Gastrocnemius medialis (tissue), 4 donors: ENCODE measurements at regions of chr1 and their contacts with region 1.

Region 1: DNA sequence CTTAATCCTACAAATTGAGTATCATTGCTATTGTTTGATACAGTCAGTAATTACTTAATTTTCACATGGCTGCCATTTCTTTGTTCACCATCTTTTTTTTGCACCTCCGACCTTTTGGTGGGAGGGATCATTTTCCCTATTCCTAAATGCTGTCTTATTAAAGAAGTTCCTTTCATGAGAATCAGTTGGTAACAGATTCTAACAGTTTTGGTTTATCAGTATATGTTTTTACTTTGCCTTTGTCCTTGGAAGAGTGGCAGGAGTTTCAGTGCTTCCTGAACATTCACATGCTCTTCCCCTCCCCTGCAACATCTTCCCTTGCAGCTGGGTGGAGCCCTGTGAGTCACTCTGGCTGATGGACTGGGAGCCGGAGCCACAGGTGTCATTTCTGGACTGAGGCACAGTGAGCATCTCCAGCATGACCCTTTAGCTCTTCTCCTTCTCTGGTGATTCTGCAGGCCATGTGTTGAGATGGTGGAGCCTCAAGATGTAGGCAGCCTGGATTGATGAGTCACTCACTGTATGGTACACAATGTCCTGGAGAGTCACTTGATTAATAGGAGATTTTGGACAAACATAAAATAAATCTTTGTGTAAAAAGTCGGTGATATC is 217.7 kb downstream of the URB2 start:
- DNase-seq: peak; percentile 90 to 91
- ATAC-seq: peak; percentile 89 to 90
- H3K4me3 ChIP-seq: no peak overlapping the region
- H3K27ac ChIP-seq: peak overlapping the region; percentile 79 to 92 (median 88)
- H3K4me1 ChIP-seq: peaks cover 22 to 33% of the 10 kb centered on the region in 2 donors
- H3K27me3 ChIP-seq: no peaks in the 10 kb centered on the region
- CTCF ChIP-seq: peak; percentile 46 to 65 (median 50)
- POLR2A ChIP-seq: peak in 1 of 2 donors; percentile 33

Region 2: DNA sequence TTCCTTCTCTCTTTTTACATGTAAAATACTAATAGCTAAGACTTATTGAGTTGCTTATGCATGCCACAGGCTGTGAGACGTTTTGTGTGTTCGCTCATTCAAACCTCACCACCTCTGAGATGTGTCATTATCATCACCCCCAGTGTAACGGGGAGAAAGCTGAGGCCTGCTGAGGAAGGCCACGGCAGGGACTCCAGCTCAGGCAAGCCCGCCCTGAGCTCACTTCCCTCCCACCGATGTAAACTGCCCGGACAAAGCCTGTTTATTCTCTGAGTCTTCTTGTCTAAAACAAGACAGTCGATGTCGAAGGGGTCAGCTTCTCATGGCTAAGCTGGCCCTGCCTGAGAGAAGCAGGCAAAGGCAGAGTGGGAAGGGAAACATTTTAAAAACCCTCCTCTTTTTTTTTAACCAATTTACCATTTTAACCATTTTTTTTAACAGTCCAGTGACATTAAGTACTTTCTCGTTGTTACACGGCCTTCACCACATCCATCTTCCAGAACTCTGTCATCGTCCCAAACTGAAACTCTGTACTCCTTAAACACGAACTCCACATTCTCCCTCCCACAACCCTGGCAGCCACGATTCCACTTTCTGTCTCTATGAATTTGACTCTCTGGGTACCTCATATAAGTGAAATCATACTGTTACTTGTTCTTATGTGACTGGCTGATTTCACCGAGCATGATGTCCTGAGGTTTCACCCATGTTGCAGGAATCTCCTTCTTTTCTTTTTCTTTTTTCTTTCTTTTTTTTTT is 18.5 kb after region 1 on chr1:
- in situ Hi-C with region 1: no loop called
- intact Hi-C with region 1: loop called (anchors 2 kb)
- DNase-seq: no peak
- ATAC-seq: no peak
- H3K4me3 ChIP-seq: no peak overlapping the region
- H3K27ac ChIP-seq: peak overlapping the region; percentile 86 to 96 (median 93)
- H3K4me1 ChIP-seq: peaks cover 43% of the 10 kb centered on the region in 2 donors
- H3K27me3 ChIP-seq: no peaks in the 10 kb centered on the region
- CTCF ChIP-seq: no peak
- POLR2A ChIP-seq: no peak

Region 3: DNA sequence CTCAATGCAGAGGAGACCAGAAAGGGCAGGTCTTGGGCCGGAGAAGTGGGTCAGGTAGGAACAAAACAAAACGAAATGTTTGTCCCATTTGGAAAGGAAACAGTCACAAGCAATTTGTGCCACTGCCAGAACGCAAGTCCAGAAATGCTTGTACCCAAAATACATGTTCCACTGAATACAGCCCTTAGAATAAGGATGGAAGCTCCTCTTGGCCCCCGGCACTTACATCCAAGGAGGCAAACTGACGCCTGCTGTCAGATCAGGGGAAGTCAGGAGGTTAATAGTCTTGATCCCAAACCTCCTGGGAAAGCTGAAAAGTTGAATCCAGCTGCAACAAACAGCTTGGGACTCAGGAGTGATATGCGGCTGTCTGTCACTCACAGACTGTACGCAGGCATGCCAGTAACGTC is 147.4 kb after region 1 on chr1:
- in situ Hi-C with region 1: no loop called
- intact Hi-C with region 1: loop called (anchors 2 kb)
- DNase-seq: peak in 1 of 2 donors; percentile 48
- ATAC-seq: peak; percentile 18 to 82
- H3K4me3 ChIP-seq: no peak overlapping the region
- H3K27ac ChIP-seq: peak overlapping the region in 1 of 4 donors; percentile 74
- H3K4me1 ChIP-seq: peaks cover 17 to 33% of the 10 kb centered on the region in 2 donors
- H3K27me3 ChIP-seq: no peaks in the 10 kb centered on the region
- CTCF ChIP-seq: no peak
- POLR2A ChIP-seq: no peak

Region 4: GRCh38 chr1:230208619-230209261 is 365.0 kb after region 1 on chr1:
- in situ Hi-C with region 1: loop called in 1 of 4 experiments (anchors 10 kb)
- intact Hi-C with region 1: loop called (anchors 5 kb)
- DNase-seq: peak; percentile 67 to 76
- ATAC-seq: peak; percentile 83 to 87
- H3K4me3 ChIP-seq: no peak overlapping the region
- H3K27ac ChIP-seq: peak overlapping the region; percentile 85 to 92 (median 88)
- H3K4me1 ChIP-seq: peaks cover 74 to 89% of the 10 kb centered on the region in 2 donors
- H3K27me3 ChIP-seq: no peaks in the 10 kb centered on the region
- CTCF ChIP-seq: peak in 1 of 5 experiments; percentile 16
- POLR2A ChIP-seq: peak; percentile 40 to 71